H1 (cell line): ENCODE measurements at regions of chr12 and their contacts with region 1.

Region 1: GRCh38 chr12:110600254-110600653 is 13.7 kb upstream of the TCTN1 start:
- DNase-seq: no peak
- H3K4me3 ChIP-seq: no peak overlapping the region
- H3K27ac ChIP-seq: no peak overlapping the region
- H3K4me1 ChIP-seq: no peaks in the 10 kb centered on the region
- H3K27me3 ChIP-seq: no peaks in the 10 kb centered on the region
- CTCF ChIP-seq: peak in 2 of 3 experiments; percentile 26 to 33; a peak in 2 of 4 replicates
- EP300 ChIP-seq: no peak
- POLR2A ChIP-seq: no peak
- RAD21 ChIP-seq: peak; percentile 60 to 64

Region 2: DNA sequence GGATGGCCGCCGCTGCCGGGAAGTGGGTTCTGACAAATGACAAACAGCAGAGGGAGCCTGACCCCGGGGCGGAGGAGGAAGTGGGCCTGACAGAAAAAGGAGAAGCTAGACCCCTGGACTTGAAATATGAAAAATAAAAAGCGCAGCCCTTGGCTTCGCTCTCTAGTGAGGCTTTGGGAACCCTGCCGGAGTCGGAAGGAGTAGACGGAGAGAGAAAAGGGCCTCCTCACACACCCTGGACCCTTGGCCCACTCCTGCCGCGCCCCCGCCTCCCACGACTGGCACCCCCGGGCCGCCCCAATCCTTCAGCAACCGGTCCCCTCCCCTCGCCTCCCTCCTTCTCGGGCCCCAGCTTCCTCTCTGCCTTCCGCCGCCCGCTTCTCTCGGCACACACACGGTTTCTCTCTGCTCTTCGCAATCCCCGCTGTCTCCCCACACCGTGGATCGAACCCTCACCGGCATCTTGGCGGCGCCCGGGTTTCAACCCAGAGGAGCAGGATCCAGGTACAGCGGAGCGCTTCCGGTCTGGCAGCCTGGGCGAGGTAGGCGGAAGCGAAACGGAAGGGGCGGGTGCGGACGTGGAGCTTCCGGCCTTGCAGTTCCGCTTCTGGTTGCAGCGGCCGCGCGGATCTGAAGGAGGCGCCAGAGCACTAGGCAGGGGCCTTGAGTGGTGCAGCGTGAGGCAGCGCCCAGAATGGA is 150.3 kb before region 1 on chr12 and contains the start of gene ARPC3:
- CTCF ChIA-PET with region 1: interaction called, 69 read pairs
- POLR2A ChIA-PET with region 1: no interaction called
- DNase-seq: peak; percentile 89 to 94
- H3K4me3 ChIP-seq: peak within 1 kb of the TSS; percentile 63 to 93 (median 87)
- H3K27ac ChIP-seq: peak within 1 kb of the TSS; percentile 11; the same call in 1 of the 2 replicates
- H3K4me1 ChIP-seq: peaks cover 0 to 3% (median 0%) of the 10 kb centered on the region in 4 experiments; a peak in 1 of 7 replicates
- H3K27me3 ChIP-seq: no peaks in the 10 kb centered on the region
- CTCF ChIP-seq: peak; percentile 79 to 86 (median 81)
- EP300 ChIP-seq: no peak
- POLR2A ChIP-seq: peak in 1 of 2 experiments; percentile 56; a peak in 1 of 3 replicates
- RAD21 ChIP-seq: peak; percentile 78 to 86
- total RNA-seq, gene ARPC3: 160 and 170 TPM in 2 replicates

Region 3: DNA sequence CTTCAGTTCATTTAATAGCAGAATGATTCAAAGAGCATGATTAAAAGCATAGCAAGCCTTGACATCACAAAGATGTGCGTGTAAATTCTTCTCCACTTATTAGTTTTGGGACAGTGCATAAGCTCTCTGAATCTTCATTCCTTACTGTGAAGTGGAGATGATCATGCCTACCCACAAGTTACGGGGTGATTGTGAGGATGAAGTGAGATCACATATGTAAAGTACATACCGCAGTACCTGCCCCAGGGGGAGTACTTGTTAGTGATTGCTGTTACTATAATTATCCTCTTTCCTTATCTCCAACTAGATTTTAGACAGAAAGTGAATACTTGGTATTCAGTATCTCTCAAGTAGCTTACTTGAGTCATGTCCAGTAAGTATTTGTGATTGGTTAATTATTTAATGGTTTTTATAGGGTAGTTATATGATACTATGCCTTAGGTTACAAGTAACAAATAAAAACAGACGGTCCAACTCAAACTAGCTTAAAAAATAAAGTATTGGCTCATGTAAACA is 92.1 kb before region 1 on chr12:
- CTCF ChIA-PET with region 1: interaction called, 117 read pairs
- POLR2A ChIA-PET with region 1: no interaction called
- DNase-seq: no peak
- H3K4me3 ChIP-seq: no peak overlapping the region
- H3K27ac ChIP-seq: no peak overlapping the region
- H3K4me1 ChIP-seq: no peaks in the 10 kb centered on the region
- H3K27me3 ChIP-seq: peaks cover 0 to 5% (median 2%) of the 10 kb centered on the region in 4 experiments; a peak in 4 of 7 replicates
- CTCF ChIP-seq: no peak
- EP300 ChIP-seq: no peak
- POLR2A ChIP-seq: no peak
- RAD21 ChIP-seq: no peak

Region 4: DNA sequence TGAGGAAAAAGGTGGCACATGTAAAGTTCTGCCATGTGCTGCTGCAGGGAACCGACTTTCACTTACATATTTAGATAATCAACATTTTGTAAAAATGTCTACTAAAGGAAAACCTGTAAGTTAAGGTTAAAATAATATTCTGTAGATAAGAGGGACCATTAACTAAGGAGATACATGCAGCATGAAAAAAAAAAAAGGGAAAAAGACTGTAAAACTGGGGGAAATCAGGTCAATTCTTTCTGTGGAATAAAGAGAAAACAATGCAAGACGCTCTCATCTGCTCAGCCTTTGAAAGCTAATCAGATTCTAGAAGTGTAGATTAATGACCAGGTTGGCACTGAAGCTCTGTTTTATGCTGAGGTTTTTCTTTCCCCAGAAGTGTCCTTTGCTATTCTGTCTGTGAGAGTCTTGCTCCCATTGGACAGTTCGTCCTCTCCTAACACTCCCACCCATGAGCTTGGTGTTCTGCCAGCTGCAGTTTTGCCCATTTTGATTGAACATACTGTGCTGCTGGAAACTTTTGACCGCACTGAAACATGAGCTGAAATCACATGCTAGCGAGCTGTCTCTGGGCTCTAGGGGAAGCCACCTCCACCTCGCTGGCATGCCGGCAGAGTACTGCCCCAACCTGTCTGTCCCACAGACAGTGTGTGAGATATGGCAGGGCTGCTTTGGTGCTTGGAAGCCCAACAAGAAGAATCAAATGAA is 56.8 kb before region 1 on chr12:
- CTCF ChIA-PET with region 1: interaction called, 190 read pairs
- POLR2A ChIA-PET with region 1: no interaction called
- DNase-seq: no peak
- H3K4me3 ChIP-seq: no peak overlapping the region
- H3K27ac ChIP-seq: no peak overlapping the region
- H3K4me1 ChIP-seq: no peaks in the 10 kb centered on the region
- H3K27me3 ChIP-seq: no peaks in the 10 kb centered on the region
- CTCF ChIP-seq: no peak
- EP300 ChIP-seq: no peak
- POLR2A ChIP-seq: no peak
- RAD21 ChIP-seq: no peak

Region 5: GRCh38 chr12:110565919-110566871 is 34.1 kb before region 1 on chr12:
- CTCF ChIA-PET with region 1: interaction called, 11 read pairs
- POLR2A ChIA-PET with region 1: no interaction called
- DNase-seq: peak in 1 of 2 experiments; percentile 41
- H3K4me3 ChIP-seq: no peak overlapping the region
- H3K27ac ChIP-seq: no peak overlapping the region
- H3K4me1 ChIP-seq: no peaks in the 10 kb centered on the region; a peak in 2 of 7 replicates
- H3K27me3 ChIP-seq: no peaks in the 10 kb centered on the region
- CTCF ChIP-seq: no peak
- EP300 ChIP-seq: no peak
- POLR2A ChIP-seq: no peak
- RAD21 ChIP-seq: no peak

Region 6: DNA sequence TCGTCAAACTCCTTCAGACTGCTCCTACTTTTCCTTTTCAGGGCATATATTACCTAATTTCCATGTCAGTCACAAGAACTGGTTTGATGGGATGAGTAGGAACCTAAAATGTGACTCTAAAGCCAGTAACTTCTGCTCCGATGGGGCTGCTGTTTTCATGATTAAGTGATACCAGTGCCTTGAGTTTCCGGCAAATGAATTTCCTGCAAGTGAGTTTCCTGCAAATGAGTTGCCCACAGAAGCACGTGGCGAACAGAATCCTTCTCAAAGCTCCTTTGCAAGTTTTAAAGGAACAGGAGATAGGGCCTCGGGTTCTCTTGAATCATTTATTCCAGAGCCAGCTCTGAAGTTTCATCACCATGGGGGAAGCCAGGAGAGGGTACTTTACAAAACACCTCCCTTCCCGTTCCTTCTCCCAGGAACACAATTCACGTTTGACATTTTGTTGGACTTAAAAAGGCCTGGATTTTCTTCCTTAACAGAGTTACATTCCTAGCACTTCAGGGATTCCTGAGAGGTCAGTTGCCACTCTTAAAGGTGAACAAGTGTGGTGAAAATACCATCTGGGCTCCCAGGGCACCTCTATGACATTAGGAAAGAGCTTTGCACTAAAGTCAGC is 14.9 kb before region 1 on chr12:
- CTCF ChIA-PET with region 1: interaction called, 55 read pairs
- POLR2A ChIA-PET with region 1: no interaction called
- DNase-seq: no peak
- H3K4me3 ChIP-seq: no peak overlapping the region
- H3K27ac ChIP-seq: no peak overlapping the region
- H3K4me1 ChIP-seq: peaks cover 0 to 4% (median 2%) of the 10 kb centered on the region in 4 experiments; a peak in 5 of 7 replicates
- H3K27me3 ChIP-seq: no peaks in the 10 kb centered on the region; a peak in 1 of 7 replicates
- CTCF ChIP-seq: no peak
- EP300 ChIP-seq: no peak
- POLR2A ChIP-seq: no peak
- RAD21 ChIP-seq: no peak

Region 7: GRCh38 chr12:110717037-110717436 is 116.8 kb after region 1 on chr12:
- CTCF ChIA-PET with region 1: no interaction called
- POLR2A ChIA-PET with region 1: no interaction called
- DNase-seq: no peak
- H3K4me3 ChIP-seq: no peak overlapping the region
- H3K27ac ChIP-seq: no peak overlapping the region
- H3K4me1 ChIP-seq: no peaks in the 10 kb centered on the region
- H3K27me3 ChIP-seq: no peaks in the 10 kb centered on the region
- CTCF ChIP-seq: no peak
- EP300 ChIP-seq: no peak
- POLR2A ChIP-seq: no peak
- RAD21 ChIP-seq: no peak